Gastrocnemius medialis (tissue), 4 donors: ENCODE measurements at regions of chr9 and their contacts with region 1.

Region 1: GRCh38 chr9:97623946-97624345 is 9.2 kb downstream of the TSTD2 start:
- DNase-seq: no peak
- ATAC-seq: no peak
- H3K4me3 ChIP-seq: no peak overlapping the region
- H3K27ac ChIP-seq: no peak overlapping the region
- H3K4me1 ChIP-seq: peaks cover 24 to 25% of the 10 kb centered on the region in 2 donors
- H3K27me3 ChIP-seq: no peaks in the 10 kb centered on the region
- CTCF ChIP-seq: no peak
- POLR2A ChIP-seq: no peak

Region 2: DNA sequence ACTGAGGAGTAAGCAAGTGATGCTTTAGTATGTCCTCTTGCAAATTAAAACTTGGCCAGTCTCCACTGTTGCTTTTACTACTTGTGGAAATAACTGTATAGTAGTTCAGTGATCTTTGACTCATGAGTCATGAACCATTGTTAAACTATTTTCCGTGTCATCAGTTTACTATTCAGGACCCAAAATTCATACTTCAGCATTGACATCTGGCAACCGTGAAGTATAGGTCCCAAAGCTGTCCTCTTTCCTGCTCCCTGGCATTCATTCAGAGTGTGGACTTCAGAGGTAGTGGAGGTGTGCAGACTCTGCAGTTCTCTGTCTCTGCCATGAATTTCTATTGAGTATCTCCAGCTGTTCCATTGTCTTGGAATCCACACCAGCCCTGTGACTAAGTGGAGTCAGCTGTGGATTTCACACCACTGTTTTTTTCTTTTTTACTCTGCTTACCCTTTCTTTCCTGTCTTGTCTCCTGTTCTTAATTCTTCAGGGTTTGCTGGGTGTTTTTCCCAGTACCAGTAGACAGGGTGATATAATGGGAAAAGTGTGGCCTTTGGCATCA is 204.6 kb before region 1 on chr9:
- in situ Hi-C with region 1: loop called in 1 of 4 experiments (anchors 5 kb)
- intact Hi-C with region 1: loop called (anchors 5 kb)
- DNase-seq: no peak
- ATAC-seq: no peak
- H3K4me3 ChIP-seq: no peak overlapping the region
- H3K27ac ChIP-seq: no peak overlapping the region
- H3K4me1 ChIP-seq: no peaks in the 10 kb centered on the region
- H3K27me3 ChIP-seq: no peaks in the 10 kb centered on the region
- CTCF ChIP-seq: no peak
- POLR2A ChIP-seq: no peak